Sigmoid colon (tissue), 7 donors: ENCODE measurements at regions of chr7 and their contacts with region 1.

Region 1: DNA sequence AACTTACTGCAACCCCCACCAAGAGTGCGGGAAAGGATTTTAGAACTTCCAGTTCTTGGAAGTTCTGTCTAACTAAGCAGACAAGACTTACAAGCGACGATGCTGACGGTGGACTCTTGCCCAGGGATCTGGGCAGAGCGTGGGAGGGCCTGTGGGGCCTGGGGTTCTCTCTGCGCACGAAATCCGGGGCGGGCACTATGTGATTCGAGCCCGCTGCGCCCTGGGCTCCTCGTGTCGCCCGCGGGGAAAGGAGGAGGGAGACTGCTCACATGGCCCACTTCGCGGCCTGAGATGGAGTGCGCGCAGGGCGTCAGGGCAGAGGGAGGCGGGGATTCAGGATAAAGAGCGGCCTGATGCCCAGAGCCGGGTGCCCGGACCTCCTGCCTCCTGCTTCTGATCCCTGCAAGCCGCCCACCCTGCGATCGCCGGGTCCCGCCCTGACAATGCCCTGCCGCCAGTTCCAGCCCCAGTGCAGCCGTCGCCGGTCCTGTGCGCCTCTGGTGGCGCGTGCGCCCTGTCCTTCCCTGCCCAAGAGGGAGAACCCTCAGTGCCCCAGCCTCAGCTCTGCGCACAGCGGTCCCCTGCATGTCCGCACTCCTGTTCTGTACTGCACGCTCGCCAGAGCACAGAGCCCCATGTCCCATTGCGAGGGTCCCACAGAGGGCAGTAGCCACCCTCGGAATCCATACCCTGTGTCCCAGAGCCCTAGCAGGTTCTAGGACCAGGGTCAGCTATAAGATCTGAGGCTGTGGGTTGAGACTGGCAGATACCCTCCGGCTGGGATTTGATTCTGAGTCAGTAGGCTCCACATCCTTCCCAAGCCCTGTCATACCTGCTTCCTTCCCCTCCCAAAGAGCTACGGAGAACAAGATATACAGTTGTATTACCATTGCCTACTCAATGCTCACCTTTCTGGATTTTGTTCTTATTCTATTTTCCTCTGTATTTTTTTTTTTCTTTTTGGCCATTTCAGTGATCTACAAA is 99.4 kb upstream of the TMEM106B start:
- DNase-seq: peak; percentile 90
- H3K4me3 ChIP-seq: peak overlapping the region; percentile 16 to 48 (median 40)
- H3K27ac ChIP-seq: peak overlapping the region in 3 of 4 donors; percentile 68 to 80 (median 68)
- H3K4me1 ChIP-seq: peaks cover 0 to 31% (median 25%) of the 10 kb centered on the region in 4 donors
- H3K27me3 ChIP-seq: no peaks in the 10 kb centered on the region
- CTCF ChIP-seq: no peak
- EP300 ChIP-seq: no peak
- POLR2A ChIP-seq: peak in 1 of 2 donors; percentile 8

Region 2: GRCh38 chr7:12211054-12211710 is 99.5 kb after region 1 on chr7 and contains the start of gene TMEM106B:
- intact Hi-C with region 1: loop called (anchors 5 kb)
- DNase-seq: peak; percentile 98
- H3K4me3 ChIP-seq: peak within 1 kb of the TSS; percentile 68 to 92 (median 86)
- H3K27ac ChIP-seq: peak within 1 kb of the TSS; percentile 90 to 99 (median 96)
- H3K4me1 ChIP-seq: peaks cover 0 to 28% (median 12%) of the 10 kb centered on the region in 4 donors
- H3K27me3 ChIP-seq: no peaks in the 10 kb centered on the region
- CTCF ChIP-seq: no peak
- EP300 ChIP-seq: peak in 1 of 4 donors; percentile 7
- POLR2A ChIP-seq: peak; percentile 71 to 73
- total RNA-seq, gene TMEM106B: 64.5 to 86.9 (median 80.3) TPM

Region 3: DNA sequence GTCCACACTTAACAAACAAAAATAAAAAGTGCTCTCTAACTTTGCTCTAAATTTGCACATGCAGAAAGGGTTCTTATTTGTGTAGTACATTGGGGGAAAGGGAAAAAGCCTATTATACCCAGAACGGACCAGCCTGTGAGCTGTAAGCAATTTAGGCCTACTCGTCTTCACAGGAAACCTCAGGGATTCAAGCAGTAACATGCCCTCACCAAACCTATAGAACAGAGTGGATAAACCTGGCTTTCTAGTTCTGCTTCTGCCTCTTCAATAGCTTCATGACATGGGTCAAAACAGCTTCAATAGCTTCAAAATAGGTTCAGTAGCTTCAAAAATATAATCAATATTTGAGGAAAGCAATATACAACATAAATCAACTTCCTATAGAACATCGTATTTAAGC is 739.4 kb after region 1 on chr7:
- intact Hi-C with region 1: no loop called
- DNase-seq: no peak
- H3K4me3 ChIP-seq: no peak overlapping the region
- H3K27ac ChIP-seq: no peak overlapping the region
- H3K4me1 ChIP-seq: no peaks in the 10 kb centered on the region
- H3K27me3 ChIP-seq: no peaks in the 10 kb centered on the region
- CTCF ChIP-seq: no peak
- EP300 ChIP-seq: no peak
- POLR2A ChIP-seq: no peak